Left ventricle myocardium inferior (tissue), 1 donor: ENCODE measurements at regions of chr10 and their contacts with region 1.

Region 1: GRCh38 chr10:110600487-110601101 is 33.1 kb downstream of the SMC3 start:
- DNase-seq: no peak
- H3K4me3 ChIP-seq: no peak overlapping the region
- H3K27ac ChIP-seq: no peak overlapping the region
- H3K4me1 ChIP-seq: no peaks in the 10 kb centered on the region
- H3K27me3 ChIP-seq: no peaks in the 10 kb centered on the region
- CTCF ChIP-seq: peak; percentile 51

Region 2: GRCh38 chr10:110883924-110884323 is 283.3 kb after region 1 on chr10:
- intact Hi-C with region 1: loop called (anchors 10 kb)
- DNase-seq: no peak
- H3K4me3 ChIP-seq: peak overlapping the region; percentile 52
- H3K27ac ChIP-seq: peak overlapping the region; percentile 1
- H3K4me1 ChIP-seq: peaks cover 54% of the 10 kb centered on the region
- H3K27me3 ChIP-seq: no peaks in the 10 kb centered on the region
- CTCF ChIP-seq: no peak

Region 3: GRCh38 chr10:110901954-110902819 is 301.6 kb after region 1 on chr10:
- intact Hi-C with region 1: loop called (anchors 10 kb)
- DNase-seq: no peak
- H3K4me3 ChIP-seq: no peak overlapping the region
- H3K27ac ChIP-seq: no peak overlapping the region
- H3K4me1 ChIP-seq: peaks cover 14% of the 10 kb centered on the region
- H3K27me3 ChIP-seq: no peaks in the 10 kb centered on the region
- CTCF ChIP-seq: no peak